Naive thymus-derived CD4-positive, alpha-beta T cell (primary cell): ENCODE measurements at regions of chr15 and their contacts with region 1.

Region 1: DNA sequence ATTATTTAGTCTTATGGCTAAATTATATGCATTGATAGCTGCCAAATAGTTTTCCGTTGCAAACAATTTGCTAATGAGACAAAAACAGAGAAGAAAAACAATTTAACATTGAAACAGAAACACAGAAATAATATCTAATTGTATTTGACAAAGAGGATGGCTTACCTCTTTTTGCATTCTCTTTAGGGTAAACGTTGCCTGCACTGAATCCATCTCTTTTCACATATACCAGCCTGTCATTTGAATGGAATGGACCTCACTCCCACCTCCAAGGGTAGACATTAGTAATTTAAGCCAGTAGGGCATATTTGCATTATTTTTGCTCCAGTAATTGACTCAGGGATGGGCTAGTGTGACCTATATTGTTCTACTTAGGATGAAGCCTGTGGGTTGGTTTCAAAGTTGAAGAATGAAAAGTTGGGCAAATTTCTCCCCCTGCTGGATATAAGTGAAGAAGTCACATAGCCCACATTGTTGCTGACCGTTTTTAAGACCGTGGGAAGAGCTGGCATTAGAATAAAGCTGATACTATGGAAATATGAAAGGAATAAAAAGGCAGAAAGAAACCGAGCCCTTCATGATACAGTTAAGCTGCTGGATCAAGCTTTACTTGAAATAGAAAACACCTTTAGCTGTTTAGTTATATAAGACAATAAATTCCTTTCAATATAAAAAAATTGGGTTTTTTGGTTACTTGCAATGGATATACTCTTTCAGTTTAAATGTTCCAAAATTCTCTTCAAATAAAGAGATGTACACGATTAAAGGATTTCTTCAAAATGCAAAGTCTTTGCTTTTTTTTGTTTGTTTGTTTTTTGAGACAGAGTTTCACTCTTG is 26.9 kb downstream of the PIERCE2 start:
- DNase-seq: peak in 5 of 9 donors; percentile 30 to 43 (median 33)
- ATAC-seq: peak; percentile 68
- H3K4me3 ChIP-seq: no peak overlapping the region
- H3K4me3 Mint-ChIP-seq: no peak overlapping the region
- H3K27ac ChIP-seq: no peak overlapping the region
- H3K27ac Mint-ChIP-seq: no peak overlapping the region
- H3K4me1 ChIP-seq: no peaks in the 10 kb centered on the region
- H3K4me1 Mint-ChIP-seq: peaks cover 0 to 10% (median 5%) of the 10 kb centered on the region in 7 donors
- H3K27me3 ChIP-seq: no peaks in the 10 kb centered on the region
- H3K27me3 Mint-ChIP-seq: peaks cover 0 to 4% (median 0%) of the 10 kb centered on the region in 5 donors

Region 2: DNA sequence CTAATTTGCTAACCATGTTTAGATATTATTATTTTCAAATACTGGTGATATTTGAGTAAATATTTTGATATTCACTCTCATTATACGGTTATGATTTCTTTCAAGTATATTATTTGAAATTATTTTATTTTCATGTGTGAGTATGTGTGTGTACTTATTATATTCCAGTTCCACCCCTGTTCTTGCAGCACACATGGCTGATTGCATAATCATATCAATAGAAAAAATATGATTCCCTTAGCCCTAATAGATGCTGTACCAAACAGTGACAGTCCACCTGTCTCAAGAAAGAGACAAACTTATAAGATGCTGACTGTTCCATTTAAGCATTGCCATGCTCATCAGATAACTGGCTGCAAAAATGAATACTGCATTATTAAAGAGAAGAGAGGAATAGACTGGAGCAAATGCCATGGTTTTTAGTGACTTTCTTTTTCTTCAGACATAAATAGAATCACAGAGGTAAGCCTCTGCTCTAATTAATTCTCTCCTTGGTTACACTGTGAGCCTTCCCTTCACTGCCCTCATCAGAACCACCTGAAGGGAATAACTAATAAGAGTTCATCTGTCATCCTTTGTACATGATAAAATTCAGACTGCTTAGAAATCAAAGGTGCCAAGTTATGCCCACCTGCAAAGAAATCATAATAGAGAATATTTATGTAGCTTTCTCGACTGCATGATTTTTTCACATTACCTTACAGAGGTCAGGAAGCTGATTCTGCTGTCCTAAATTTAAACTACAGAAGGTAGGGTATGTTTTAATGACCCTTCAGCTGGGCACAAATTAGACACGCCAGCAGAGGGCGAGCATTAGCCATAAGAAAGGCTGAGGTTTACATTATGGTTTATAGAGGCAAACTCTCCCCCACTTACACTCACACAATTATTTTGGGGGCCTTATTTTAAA is 1472.6 kb before region 1 on chr15:
- CTCF ChIA-PET with region 1: no interaction called
- POLR2A ChIA-PET with region 1: no interaction called
- intact Hi-C with region 1: loop called in 1 of 2 experiments (anchors 10 kb)
- DNase-seq: no peak
- ATAC-seq: no peak
- H3K4me3 ChIP-seq: no peak overlapping the region
- H3K4me3 Mint-ChIP-seq: no peak overlapping the region
- H3K27ac ChIP-seq: no peak overlapping the region
- H3K27ac Mint-ChIP-seq: no peak overlapping the region
- H3K4me1 ChIP-seq: no peaks in the 10 kb centered on the region
- H3K4me1 Mint-ChIP-seq: no peaks in the 10 kb centered on the region
- H3K27me3 ChIP-seq: no peaks in the 10 kb centered on the region
- H3K27me3 Mint-ChIP-seq: peaks cover 0 to 18% (median 4%) of the 10 kb centered on the region in 5 donors

Region 3: DNA sequence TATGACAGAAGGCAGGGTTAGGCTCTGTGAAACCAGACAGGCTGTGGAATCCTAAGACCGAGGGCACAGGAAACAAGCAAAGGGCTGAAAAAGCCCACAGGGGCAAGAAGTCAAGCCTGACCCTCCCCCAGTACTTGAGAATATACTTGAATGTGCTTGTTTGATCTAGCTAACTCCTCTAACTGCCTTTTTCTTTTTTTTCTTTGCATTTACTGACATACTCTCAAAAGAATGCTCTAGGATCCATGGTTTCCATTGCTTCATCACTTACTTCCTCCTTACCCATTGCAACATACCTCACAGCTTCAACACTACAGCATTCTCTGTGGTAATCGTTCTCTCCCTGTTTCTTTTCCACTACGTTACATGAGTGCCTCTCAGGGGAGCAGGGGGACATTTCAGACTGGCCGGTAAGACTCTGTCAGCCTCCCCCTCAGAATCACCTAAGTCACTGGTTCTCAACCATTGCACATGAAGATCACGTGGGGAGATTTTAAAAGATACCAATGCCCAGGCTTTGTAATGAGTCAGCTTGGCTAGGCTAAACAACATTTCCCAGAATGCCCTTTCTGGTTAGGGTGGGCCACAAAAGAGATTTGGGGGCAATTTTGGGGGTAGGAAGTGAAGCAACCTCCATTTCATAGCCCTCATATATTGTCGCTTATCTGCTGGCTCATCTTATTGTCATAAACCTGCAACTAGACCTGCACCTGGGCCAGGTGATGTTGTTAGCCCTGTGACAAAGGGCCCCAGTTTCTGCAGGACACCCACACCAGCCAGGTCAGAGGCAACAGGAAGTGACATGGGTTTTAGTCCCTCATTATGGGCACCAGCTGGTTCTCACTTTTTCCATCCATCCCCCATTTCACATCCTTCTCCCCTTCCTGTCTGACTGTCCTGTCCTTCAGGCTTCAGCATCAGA is 213.9 kb before region 1 on chr15:
- CTCF ChIA-PET with region 1: interaction called, 8 read pairs
- POLR2A ChIA-PET with region 1: no interaction called
- intact Hi-C with region 1: loop called (anchors 1 kb)
- DNase-seq: peak in 1 of 9 donors; percentile 26
- ATAC-seq: peak; percentile 48
- H3K4me3 ChIP-seq: no peak overlapping the region
- H3K4me3 Mint-ChIP-seq: peak overlapping the region in 5 of 10 donors; percentile 17 to 69 (median 38)
- H3K27ac ChIP-seq: no peak overlapping the region
- H3K27ac Mint-ChIP-seq: peak overlapping the region in 5 of 9 donors; percentile 11 to 87 (median 38)
- H3K4me1 ChIP-seq: peaks cover 43 to 54% of the 10 kb centered on the region in 2 donors
- H3K4me1 Mint-ChIP-seq: peaks cover 44 to 71% (median 51%) of the 10 kb centered on the region in 7 donors
- H3K27me3 ChIP-seq: no peaks in the 10 kb centered on the region
- H3K27me3 Mint-ChIP-seq: no peaks in the 10 kb centered on the region

Region 4: DNA sequence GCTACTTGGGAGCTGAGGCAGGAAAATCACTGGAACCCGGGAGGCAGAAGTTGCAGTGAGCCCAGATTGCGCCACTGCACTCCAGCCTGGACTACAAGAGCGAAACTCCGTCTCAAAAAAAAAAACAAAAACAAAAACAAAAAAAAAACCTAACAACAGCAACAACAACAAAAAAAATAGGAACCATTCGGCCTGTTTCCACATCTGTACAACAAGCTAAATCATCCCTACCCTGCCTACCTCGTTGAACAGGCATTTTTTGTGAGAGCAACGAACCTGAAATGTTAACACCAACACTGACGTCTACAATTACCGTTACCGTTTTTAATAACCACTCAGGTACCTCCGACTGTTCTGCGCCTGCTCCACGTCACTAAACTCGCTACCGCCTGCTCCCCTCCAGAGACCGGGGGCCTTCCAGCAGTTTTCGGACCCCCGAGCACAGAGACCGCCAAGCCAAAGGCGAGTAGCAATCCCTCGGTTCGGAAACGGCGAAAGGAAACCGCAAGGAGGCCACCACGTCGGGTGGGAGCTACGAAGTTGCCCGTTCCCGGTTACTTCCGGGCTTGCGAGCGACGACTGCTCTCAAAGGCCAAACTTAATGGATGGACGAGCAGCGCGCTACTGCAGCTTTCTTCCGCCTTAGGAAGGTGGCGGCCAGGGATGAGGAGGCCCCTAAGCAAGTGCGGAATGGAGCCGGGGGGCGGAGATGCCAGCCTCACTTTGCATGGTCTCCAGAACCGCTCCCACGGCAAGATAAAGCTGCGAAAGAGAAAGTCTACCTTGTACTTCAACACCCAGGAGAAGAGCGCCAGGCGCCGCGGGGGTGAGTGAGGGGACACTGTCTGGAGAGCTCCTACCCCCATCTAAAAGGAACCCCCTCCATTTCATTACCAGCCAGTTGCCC is 116.4 kb before region 1 on chr15 and contains the starts of genes PIGB and PIGBOS1:
- CTCF ChIA-PET with region 1: interaction called, 6 read pairs
- POLR2A ChIA-PET with region 1: no interaction called
- intact Hi-C with region 1: loop called in 1 of 2 experiments (anchors 2 kb)
- DNase-seq: peak; percentile 73 to 88 (median 84)
- ATAC-seq: peak; percentile 91
- H3K4me3 ChIP-seq: peak within 1 kb of the TSS; percentile 95
- H3K4me3 Mint-ChIP-seq: peak within 1 kb of the TSS; percentile 98 to 99 (median 98)
- H3K27ac ChIP-seq: peak within 1 kb of the TSS; percentile 98
- H3K27ac Mint-ChIP-seq: peak within 1 kb of the TSS; percentile 99 to 100 (median 100)
- H3K4me1 ChIP-seq: peaks cover 5 to 28% of the 10 kb centered on the region in 2 donors
- H3K4me1 Mint-ChIP-seq: peaks cover 41 to 86% (median 76%) of the 10 kb centered on the region in 7 donors
- H3K27me3 ChIP-seq: no peaks in the 10 kb centered on the region
- H3K27me3 Mint-ChIP-seq: no peaks in the 10 kb centered on the region
- total RNA-seq, gene PIGB: 21.4 to 30.2 (median 24.3) TPM
- total RNA-seq, gene PIGBOS1: 8.8 to 21.3 (median 12.5) TPM

Region 5: GRCh38 chr15:55372701-55373440 is 62.3 kb before region 1 on chr15:
- CTCF ChIA-PET with region 1: no interaction called
- POLR2A ChIA-PET with region 1: no interaction called
- intact Hi-C with region 1: loop called in 1 of 2 experiments (anchors 10 kb)
- DNase-seq: no peak
- ATAC-seq: no peak
- H3K4me3 ChIP-seq: no peak overlapping the region
- H3K4me3 Mint-ChIP-seq: no peak overlapping the region
- H3K27ac ChIP-seq: no peak overlapping the region
- H3K27ac Mint-ChIP-seq: peak overlapping the region in 3 of 9 donors; percentile 0 to 9 (median 6)
- H3K4me1 ChIP-seq: no peaks in the 10 kb centered on the region
- H3K4me1 Mint-ChIP-seq: peaks cover 0 to 15% (median 0%) of the 10 kb centered on the region in 7 donors
- H3K27me3 ChIP-seq: no peaks in the 10 kb centered on the region
- H3K27me3 Mint-ChIP-seq: no peaks in the 10 kb centered on the region

Region 6: DNA sequence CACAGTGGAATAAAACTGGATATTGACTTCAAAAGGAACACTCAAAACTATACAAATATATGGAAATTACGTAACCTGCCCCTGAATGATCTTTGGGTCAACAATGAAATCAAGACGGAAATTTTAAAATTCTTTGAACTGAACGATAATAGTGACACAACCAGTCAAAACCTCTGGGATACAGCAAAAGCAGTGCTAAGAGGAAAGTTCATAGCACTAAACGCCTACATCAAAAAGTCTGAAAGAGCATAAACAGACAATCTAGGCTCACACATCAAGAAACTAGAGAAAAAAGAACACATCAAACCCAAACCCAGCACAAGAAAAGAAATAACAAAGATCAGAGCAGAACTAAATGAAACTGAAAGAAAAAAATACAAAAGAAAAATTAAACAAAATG is 26.2 kb after region 1 on chr15:
- CTCF ChIA-PET with region 1: no interaction called
- POLR2A ChIA-PET with region 1: no interaction called
- intact Hi-C with region 1: no loop called
- DNase-seq: no peak
- ATAC-seq: no peak
- H3K4me3 ChIP-seq: no peak overlapping the region
- H3K4me3 Mint-ChIP-seq: no peak overlapping the region
- H3K27ac ChIP-seq: no peak overlapping the region
- H3K27ac Mint-ChIP-seq: no peak overlapping the region
- H3K4me1 ChIP-seq: no peaks in the 10 kb centered on the region
- H3K4me1 Mint-ChIP-seq: peaks cover 0 to 3% (median 0%) of the 10 kb centered on the region in 7 donors
- H3K27me3 ChIP-seq: no peaks in the 10 kb centered on the region
- H3K27me3 Mint-ChIP-seq: peaks cover 0 to 5% (median 0%) of the 10 kb centered on the region in 5 donors

Region 7: GRCh38 chr15:55484917-55485672 is 49.9 kb after region 1 on chr15:
- CTCF ChIA-PET with region 1: no interaction called
- POLR2A ChIA-PET with region 1: no interaction called
- intact Hi-C with region 1: no loop called
- DNase-seq: no peak
- ATAC-seq: no peak
- H3K4me3 ChIP-seq: no peak overlapping the region
- H3K4me3 Mint-ChIP-seq: no peak overlapping the region
- H3K27ac ChIP-seq: no peak overlapping the region
- H3K27ac Mint-ChIP-seq: peak overlapping the region in 1 of 9 donors; percentile 84
- H3K4me1 ChIP-seq: no peaks in the 10 kb centered on the region
- H3K4me1 Mint-ChIP-seq: no peaks in the 10 kb centered on the region
- H3K27me3 ChIP-seq: no peaks in the 10 kb centered on the region
- H3K27me3 Mint-ChIP-seq: peaks cover 0 to 3% (median 0%) of the 10 kb centered on the region in 5 donors

Region 8: DNA sequence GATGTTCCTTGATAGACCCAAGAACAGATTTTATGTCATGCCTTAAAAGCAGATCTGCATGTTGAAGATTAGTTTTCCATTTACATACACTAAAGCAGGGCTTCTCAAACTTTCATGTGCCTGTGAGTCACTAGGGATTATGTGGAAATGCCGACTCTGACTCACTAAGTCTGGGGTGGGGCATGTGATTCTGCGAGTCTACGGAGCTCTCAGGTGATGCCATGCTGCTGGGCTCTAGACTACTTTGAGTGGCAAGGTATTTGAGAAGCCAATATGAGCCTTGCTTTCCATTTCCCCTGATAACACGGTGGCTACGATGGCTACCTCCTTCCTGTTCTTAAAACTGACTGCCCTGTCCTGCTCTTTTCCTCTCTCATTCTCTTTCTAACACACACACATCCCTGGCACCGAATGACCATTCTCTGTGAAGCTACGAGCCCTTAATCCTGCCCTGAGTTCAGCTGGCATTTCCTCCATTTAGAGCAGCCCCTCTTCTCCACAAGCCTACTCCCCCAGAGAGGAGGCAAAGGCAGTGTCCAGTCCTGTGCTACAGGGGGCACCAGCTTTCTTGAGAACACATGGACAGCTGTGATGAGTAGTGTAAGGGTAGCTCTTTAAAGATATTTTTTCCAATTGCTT is 192.6 kb after region 1 on chr15:
- CTCF ChIA-PET with region 1: no interaction called
- POLR2A ChIA-PET with region 1: no interaction called
- intact Hi-C with region 1: no loop called
- DNase-seq: no peak
- ATAC-seq: no peak
- H3K4me3 ChIP-seq: no peak overlapping the region
- H3K4me3 Mint-ChIP-seq: no peak overlapping the region
- H3K27ac ChIP-seq: no peak overlapping the region
- H3K27ac Mint-ChIP-seq: peak overlapping the region in 1 of 9 donors; percentile 27
- H3K4me1 ChIP-seq: no peaks in the 10 kb centered on the region
- H3K4me1 Mint-ChIP-seq: no peaks in the 10 kb centered on the region
- H3K27me3 ChIP-seq: no peaks in the 10 kb centered on the region
- H3K27me3 Mint-ChIP-seq: peaks cover 0 to 11% (median 0%) of the 10 kb centered on the region in 5 donors